ENCODE measurements at regions of chr4 and their contacts with region 1.

Region 1: GRCh38 chr4:8241895-8242696 is 27.5 kb upstream of the HTRA3 start:
- DNase-seq: peak; percentile 75 to 94 (median 86)

Region 2: GRCh38 chr4:7398104-7398423 is 844.0 kb before region 1 on chr4:
- intact Hi-C with region 1: no loop called
- DNase-seq: peak in 21 of 42 donors; percentile 11 to 63 (median 35)

Region 3: DNA sequence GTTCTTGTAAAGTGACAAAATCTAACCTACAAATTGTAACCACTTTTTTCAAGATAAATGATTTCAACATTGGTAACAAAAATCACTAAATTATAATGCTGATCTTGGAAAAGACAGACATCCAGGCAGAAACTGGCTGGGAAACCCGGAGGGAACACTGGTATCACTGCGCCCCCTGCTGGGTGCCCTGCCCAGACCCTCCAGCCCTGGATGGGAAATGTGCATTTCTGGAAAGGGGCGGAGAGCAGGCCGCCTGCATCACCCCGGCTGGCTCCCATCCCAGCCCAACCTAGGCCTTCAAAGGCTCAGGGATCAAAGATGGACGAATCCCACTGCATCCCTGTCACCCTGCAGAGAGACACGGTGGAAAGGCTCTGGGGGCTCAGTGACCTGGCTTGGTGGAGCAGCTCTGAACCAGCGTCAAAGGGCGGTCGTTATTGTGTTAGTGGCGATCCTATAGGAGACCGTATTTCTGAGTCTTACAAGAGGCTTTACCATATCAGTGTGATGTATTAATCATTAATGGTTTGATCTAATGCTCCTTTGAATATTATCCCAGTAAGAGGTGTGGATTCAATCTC is 161.2 kb after region 1 on chr4:
- intact Hi-C with region 1: loop called (anchors 2 kb)
- DNase-seq: peak; percentile 76 to 96 (median 90)